GM10248 (cell line): ENCODE measurements at regions of chr19 and their contacts with region 1.

Region 1: DNA sequence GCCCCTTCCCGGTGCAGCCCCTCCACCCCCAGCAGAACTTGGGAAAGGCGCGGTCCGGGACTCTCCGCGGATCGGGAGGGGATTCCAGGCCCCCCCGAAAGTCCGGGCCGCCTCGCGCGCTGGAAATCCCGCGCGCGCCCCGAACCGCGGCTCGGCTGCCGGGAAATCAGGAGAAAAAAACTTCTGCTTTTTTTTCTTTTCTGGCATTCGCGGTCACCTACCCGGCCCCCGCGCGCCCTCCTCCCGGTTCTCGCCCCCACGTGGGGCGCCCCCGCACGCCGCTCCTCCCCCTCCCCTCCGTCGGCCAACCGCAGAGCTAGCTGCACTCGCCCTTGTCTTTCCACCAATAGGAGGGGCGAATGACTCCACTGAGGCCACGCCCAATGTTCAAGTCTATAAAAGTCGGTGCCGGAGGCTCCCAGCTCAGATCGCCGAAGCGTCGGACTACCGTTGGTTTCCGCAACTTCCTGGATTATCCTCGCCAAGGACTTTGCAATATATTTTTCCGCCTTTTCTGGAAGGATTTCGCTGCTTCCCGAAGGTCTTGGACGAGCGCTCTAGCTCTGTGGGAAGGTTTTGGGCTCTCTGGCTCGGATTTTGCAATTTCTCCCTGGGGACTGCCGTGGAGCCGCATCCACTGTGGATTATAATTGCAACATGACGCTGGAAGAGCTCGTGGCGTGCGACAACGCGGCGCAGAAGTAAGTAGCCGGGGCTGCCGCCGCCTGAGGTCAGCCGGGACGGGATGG is at the start of gene GADD45B:
- DNase-seq: peak; percentile 98
- CTCF ChIP-seq: no peak

Region 2: DNA sequence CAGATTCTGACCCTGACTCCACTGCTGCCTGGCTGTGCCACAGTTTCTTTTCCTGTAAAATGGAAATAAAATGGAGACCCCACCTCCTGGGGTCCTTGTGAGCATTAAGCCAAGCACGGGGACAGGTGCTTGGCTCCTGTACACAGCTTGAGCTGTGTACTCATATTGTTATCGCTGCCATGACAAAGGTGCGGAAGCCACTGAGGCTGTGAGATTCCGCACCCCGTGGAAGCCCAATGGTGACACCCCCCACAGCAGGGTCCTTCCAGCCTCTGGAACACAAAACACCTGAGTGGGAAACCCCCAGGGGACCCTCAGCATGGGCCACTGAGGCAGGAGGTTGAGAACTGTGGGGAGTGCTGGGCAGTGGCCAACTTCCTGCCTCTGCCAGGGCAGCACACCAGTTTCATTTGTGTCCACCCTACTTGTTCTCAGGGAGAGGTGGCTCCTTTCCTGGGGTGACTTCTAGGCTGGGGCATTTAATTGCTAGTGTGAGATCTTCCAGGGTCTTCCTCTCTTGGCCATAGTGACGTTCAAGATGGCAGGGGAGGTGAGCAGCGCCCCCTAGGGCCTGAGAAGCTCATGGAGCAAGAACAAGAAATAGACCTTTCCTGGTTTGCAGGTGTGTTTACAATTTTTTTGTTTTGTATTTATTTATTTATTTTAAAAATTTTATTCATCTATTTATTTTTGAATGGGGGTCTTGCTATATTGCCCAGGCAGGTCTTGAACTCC is 214.3 kb before region 1 on chr19:
- CTCF ChIA-PET with region 1: no interaction called
- POLR2A ChIA-PET with region 1: interaction called, 11 read pairs
- DNase-seq: no peak
- CTCF ChIP-seq: peak; percentile 53

Region 3: GRCh38 chr19:2461751-2462634 is 13.9 kb before region 1 on chr19:
- CTCF ChIA-PET with region 1: interaction called, 6 read pairs
- POLR2A ChIA-PET with region 1: interaction called, 45 read pairs
- DNase-seq: peak; percentile 89
- CTCF ChIP-seq: no peak

Region 4: GRCh38 chr19:2552859-2553258 is 77.0 kb after region 1 on chr19:
- CTCF ChIA-PET with region 1: interaction called, 4 read pairs
- POLR2A ChIA-PET with region 1: interaction called, 24 read pairs
- DNase-seq: peak; percentile 85
- CTCF ChIP-seq: no peak

Region 5: GRCh38 chr19:2594319-2594718 is 118.4 kb after region 1 on chr19:
- CTCF ChIA-PET with region 1: interaction called, 16 read pairs
- POLR2A ChIA-PET with region 1: interaction called, 165 read pairs
- DNase-seq: peak; percentile 55
- CTCF ChIP-seq: no peak

Region 6: DNA sequence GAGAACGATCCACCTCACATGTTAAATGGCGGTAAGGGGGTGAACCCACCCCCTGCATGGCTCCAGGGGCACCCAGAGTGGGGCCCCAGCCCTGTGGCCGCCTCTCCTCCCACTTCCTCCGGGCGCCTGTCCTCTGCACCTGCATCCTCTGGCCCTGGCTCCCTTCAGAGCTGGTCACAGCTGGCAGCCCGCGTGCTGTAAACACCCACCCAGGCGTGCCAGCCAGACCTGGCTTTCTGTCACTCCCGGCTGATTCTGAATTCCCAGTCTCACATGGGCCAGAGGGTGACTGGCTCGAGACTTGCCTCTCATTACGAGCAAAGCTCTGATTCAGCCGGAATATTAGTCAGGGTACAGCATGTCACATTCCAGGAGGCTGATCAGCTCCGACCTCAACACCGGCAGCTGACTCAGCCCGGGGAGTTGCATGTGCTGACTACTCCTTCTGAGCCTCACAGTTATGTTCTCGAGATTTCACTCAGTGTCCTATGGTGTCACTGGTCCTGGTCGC is 151.5 kb after region 1 on chr19:
- CTCF ChIA-PET with region 1: interaction called, 8 read pairs
- POLR2A ChIA-PET with region 1: interaction called, 208 read pairs
- DNase-seq: peak; percentile 39
- CTCF ChIP-seq: no peak